PC-3 (cell line): ENCODE measurements at regions of chr19 and their contacts with region 1.

Region 1: DNA sequence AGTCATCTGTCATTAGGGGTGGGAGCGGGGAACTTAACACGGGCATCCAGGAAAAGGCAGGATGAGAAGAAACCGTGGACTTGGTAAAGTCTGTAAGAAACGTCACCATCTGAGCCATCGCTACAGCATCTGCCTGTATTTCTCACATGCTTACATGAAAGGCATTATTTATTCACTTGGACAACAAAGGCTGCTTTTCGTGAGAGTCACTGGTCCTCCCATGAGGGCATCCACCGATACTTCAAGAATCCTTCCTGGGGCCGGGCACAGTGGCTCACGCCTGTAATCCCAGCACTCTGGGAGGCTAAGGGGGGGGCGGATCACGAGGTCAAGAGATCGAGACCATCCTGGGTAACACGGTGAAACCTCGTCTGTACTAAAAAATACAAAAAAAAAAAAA is 16.1 kb downstream of the ZNF446 start:
- DNase-seq: no peak
- ATAC-seq: no peak
- H3K4me3 ChIP-seq: no peak overlapping the region
- H3K27ac ChIP-seq: no peak overlapping the region
- H3K4me1 ChIP-seq: no peaks in the 10 kb centered on the region
- H3K27me3 ChIP-seq: no peaks in the 10 kb centered on the region
- CTCF ChIP-seq: no peak

Region 2: DNA sequence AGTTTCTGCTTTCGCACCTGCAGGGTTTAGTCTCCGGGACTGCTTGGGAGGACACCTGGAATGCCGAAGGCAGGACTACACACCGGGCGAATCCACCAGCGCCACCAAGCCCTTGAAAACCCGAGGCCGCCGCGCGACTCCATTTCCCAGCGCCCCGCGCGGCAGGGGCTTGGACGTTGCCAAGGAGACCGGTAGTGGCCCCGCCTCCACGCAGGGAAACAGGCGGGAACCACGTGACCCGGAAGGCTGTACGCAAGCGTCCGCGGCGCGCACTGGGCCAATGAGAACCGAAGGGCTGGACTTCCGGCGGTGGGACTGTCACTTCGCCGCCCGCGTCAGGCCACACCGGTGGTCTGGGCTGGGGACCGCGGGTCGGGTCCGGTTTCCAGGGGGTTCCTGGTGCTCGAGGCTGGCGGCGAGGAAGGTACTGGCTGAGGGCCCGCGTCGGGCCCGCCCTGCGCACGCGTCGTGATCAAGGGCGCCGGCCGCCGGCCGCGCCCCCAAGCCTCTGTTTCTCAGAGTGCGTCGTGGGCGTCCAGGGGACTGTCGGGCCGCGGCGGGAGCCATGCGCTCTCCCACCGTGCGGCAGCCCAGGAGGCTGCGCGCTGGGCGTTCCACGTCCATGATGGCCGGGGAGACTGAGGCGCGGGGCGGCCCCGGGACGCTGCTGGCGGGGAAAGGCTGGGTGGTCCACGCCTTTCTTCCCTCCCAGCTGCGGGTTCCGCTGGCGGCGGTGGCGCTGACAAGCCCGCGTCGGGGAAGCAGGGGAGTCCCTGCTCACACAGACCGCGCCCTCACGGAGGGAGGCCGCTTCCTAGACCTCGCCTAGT is 25.3 kb before region 1 on chr19 and contains the start of gene ZNF324:
- CTCF ChIA-PET with region 1: no interaction called
- POLR2A ChIA-PET with region 1: no interaction called
- intact Hi-C with region 1: no loop called
- DNase-seq: peak; percentile 99
- ATAC-seq: peak; percentile 94
- H3K4me3 ChIP-seq: peak within 1 kb of the TSS; percentile 80
- H3K27ac ChIP-seq: peak within 1 kb of the TSS; percentile 9; the same call in 1 of the 2 replicates
- H3K4me1 ChIP-seq: peaks cover 9% of the 10 kb centered on the region; the same call in 1 of the 2 replicates
- H3K27me3 ChIP-seq: no peaks in the 10 kb centered on the region
- CTCF ChIP-seq: peak; percentile 36
- total RNA-seq, gene ZNF324: 14.8 and 15.9 TPM in 2 replicates

Region 3: DNA sequence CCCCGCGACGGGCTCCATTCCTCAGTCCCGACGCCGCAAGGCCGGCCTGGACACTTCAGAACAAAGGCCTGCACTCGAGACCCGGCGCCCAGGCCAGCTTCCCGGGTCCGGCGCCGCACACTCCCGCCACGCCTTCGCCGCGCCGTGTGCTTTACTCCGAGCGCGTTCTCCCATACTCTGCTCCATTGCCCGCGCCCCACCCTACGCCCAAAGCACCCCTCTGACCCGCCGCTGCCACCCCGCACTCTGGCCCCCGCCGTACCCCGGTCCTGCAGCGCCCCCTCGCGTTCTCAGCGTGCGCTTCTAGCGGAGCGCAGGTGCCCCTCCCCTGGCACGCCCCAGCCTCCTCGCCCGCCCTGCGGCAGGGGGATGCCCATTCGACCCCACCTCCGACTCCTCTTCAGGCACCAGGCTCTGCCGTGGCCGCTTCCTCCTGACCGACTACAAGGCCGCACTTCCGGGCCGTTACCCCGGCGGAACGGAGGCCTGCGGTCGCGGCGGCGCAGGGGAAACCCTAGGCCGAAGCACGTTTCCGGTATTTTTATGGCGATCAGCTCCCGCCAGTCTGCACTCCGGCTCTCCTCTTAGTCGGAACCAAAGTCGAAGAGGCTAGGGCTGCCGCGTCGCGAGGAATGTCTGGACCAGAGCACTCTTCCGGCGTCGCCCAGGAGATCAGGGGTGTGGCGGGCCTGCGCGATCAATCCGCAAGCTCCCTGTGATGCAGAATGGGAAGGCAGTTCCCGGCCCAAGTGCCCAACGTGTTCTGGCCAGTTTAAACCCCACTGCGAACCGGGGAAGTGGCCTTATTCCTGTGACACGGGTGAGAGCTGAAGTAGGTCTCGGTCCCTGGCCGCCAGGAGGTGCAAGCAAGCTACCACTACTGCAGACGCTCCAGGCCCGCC is 27.3 kb after region 1 on chr19 and contains the start of gene ZBTB45:
- CTCF ChIA-PET with region 1: no interaction called
- POLR2A ChIA-PET with region 1: no interaction called
- intact Hi-C with region 1: no loop called
- DNase-seq: peak; percentile 98
- ATAC-seq: peak; percentile 79
- H3K4me3 ChIP-seq: peak within 1 kb of the TSS; percentile 89
- H3K27ac ChIP-seq: peak within 1 kb of the TSS; percentile 65
- H3K4me1 ChIP-seq: peaks cover 13% of the 10 kb centered on the region
- H3K27me3 ChIP-seq: no peaks in the 10 kb centered on the region
- CTCF ChIP-seq: peak; percentile 79
- total RNA-seq, gene ZBTB45: 14.0 and 19.1 TPM in 2 replicates

Region 4: DNA sequence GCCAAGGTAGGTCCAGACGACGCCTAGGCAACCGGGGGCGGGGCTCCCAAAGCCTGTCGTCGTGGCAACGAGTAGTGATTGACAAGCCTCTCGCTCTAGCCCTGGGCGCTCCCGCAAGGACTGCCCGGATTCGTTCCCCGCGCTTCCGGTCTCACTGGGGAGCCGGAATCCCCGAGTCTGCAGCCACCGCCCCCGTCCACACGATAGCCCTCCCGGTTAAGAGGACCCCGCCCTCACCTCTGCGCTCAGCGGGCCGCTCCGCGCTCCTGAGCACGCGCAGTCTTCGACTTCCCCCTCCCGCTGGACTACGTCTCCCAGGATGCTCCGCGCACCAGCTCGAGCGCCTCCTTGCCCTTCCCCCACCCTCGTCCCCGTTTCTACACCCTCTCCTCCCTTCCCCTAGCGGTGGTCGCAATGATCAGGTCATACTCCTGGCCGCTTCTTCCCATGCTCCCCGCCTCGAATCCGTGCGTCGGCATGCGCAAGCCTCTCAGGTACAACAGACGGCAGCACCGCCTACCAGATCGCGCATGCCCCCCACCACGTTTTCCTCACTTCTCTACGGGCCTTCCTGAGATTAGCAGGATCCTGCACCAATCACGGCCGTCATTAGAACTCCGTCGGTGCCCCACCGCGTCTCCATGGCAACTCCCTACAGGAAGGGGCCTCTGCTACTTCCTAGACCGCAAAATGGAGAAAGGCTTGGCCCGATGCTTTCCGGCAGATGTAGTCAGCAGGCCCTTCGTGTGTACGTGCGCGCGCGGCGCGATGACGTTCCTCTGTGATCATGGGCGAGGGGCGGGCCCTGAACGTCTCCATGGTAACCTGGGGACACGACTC is 80.8 kb after region 1 on chr19 and contains the start of gene MZF1:
- CTCF ChIA-PET with region 1: no interaction called
- POLR2A ChIA-PET with region 1: interaction called, 20 read pairs
- intact Hi-C with region 1: no loop called
- DNase-seq: peak; percentile 100
- ATAC-seq: peak; percentile 69
- H3K4me3 ChIP-seq: peak within 1 kb of the TSS; percentile 76
- H3K27ac ChIP-seq: peak within 1 kb of the TSS; percentile 91
- H3K4me1 ChIP-seq: peaks cover 23% of the 10 kb centered on the region
- H3K27me3 ChIP-seq: no peaks in the 10 kb centered on the region
- CTCF ChIP-seq: no peak
- total RNA-seq, gene MZF1: 18.0 and 29.3 TPM in 2 replicates